Dendritic cell treated with granulocyte-macrophage colony-stimulating factor and Interleukin-4, amounts not matched to agents 40 ng/mL and 50 ng/mL, for 4 days (primary cell): ENCODE measurements at regions of chr17 and their contacts with region 1.

Region 1: DNA sequence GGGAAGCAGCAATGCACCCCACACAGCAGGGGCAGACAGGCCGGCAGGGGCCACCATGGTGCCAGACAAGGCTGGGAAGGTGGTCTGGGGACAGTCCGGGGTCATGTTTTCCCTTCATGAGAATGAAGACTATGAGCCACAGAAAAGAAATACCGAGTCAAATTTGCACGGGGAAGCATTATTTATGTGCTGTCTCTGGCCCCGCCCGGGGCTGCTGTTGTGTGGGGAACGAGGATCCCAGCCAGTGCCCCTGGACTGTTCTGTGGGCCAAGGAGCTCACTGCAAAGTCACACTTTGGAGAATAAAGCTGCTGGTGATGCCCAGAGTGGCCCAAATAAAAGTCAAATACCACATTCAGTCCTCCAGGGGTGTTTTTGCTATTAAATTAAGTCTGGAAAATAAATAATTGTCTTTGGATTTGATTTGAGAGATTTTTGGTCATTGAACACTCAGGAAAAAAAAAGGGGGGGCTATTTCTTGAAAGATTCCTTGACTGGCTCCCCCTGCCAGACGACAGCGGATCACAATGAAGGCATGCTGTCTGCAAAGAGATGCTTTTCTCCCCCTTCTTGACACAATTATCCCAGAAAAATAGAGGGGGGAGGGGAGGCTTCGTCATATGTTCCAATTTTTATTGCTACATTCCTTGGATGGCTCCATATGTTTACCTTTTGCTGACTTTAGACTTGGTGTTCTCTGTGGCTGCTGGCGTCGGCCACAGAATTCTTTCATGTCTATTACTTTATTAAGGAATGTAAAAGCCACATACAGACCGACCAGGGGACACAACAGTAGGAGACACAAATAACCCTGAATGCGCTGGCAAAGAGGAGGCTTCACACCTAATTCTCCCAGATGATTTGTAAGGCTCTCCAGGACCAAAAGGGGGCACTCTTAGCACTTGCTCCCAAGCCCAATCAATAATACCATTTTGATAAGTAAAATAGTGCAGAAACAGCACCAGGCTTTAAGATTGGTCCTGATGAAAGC is 27.1 kb upstream of the ANKFN1 start:
- H3K4me3 Mint-ChIP-seq: no peak overlapping the region
- H3K27ac Mint-ChIP-seq: no peak overlapping the region
- H3K4me1 Mint-ChIP-seq: peaks cover 6% of the 10 kb centered on the region
- H3K27me3 Mint-ChIP-seq: no peaks in the 10 kb centered on the region

Region 2: GRCh38 chr17:56319517-56319916 is 193.4 kb after region 1 on chr17:
- intact Hi-C with region 1: loop called (anchors 2 kb)
- H3K4me3 Mint-ChIP-seq: no peak overlapping the region
- H3K27ac Mint-ChIP-seq: no peak overlapping the region
- H3K4me1 Mint-ChIP-seq: no peaks in the 10 kb centered on the region
- H3K27me3 Mint-ChIP-seq: no peaks in the 10 kb centered on the region

Region 3: DNA sequence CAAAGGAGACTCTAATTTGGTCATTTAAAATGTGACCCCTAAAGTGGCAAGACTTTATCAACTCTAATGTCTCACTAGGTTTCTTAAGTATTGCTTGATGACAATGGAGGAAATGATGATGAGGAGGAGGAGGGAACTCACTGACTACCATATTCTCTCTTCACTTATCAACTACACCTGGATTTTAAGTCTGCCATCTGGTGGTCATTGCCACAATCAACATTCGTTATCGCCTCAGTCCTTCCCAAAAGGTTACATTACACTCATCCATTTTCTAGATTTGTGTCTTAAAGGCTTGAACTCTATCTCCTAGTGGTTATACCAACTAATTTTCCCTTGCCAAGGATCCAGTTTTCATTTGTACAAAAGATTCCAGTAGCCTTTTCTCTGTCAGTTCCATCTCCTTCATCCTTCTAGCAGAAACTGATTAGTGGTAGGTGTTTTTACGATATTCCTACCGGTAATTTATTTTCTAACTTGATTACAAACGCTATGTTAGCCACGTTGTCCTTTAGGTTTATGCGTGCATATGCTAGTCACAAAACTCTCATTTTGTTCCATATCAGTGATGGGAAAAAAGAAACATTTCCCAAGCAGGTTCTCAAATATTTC is 352.8 kb after region 1 on chr17:
- intact Hi-C with region 1: loop called (anchors 5 kb)
- H3K4me3 Mint-ChIP-seq: no peak overlapping the region
- H3K27ac Mint-ChIP-seq: no peak overlapping the region
- H3K4me1 Mint-ChIP-seq: no peaks in the 10 kb centered on the region
- H3K27me3 Mint-ChIP-seq: no peaks in the 10 kb centered on the region

Region 4: DNA sequence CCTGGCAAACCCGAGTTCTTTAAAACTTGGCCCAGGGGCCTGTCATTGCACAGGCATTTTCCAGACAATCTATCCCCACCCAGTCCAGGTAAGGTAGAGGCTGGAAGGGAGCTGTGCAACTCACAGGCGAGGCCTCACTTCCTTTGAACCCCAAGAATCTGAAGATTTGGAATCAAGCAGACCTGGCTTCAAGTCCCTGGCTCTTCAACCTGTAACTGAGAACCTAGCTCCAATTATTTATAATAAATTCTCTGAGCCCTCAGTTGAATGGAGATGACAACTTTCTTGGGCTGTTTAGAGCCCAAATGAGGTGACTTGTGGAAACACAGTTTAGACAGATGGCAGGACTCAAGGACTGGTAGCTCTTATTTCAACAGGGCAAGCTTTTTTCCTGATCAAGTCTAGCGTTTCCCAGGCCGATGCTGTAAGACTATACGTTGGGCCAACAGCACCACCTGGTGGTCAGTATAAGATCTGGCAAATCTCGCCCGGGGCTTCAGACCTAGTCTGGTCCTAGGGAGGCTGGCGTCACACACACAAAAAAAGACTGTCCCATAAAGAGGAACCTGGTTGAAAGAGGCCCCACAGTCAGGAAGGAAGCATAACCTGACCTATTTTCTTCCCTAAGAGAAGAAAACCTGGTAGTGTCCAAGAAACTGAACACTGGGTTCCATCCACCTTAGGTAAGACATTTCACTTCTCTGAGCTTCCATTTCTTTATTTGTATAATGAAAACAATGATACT is 589.7 kb after region 1 on chr17:
- intact Hi-C with region 1: loop called (anchors 5 kb)
- H3K4me3 Mint-ChIP-seq: no peak overlapping the region
- H3K27ac Mint-ChIP-seq: no peak overlapping the region
- H3K4me1 Mint-ChIP-seq: no peaks in the 10 kb centered on the region
- H3K27me3 Mint-ChIP-seq: no peaks in the 10 kb centered on the region